AG04449 (cell line): ENCODE measurements at regions of chr6 and their contacts with region 1.

Region 1: DNA sequence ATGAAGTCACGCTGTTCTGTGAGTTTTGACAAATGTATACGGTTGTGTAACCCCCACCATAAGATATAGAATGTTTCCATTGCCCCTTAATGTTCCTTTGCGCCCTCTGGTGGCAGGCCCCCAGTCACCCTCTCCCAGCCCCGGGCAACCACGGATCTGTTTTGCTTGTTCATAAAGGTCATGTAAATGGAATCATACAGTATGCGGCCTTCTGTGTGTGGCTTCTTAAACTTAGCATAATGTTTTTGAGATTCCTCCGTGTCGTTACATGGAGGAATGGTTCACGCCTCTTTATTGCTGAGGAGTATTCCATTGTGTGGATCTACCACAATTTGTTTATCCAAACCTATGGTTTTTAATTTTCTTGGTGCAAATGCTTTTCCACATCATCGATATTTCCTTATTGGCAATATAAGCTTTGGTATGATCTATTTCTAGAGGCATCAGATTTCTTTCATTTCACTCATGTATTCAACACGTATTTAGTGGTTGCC is 28.4 kb downstream of the LYRM2 start:
- DNase-seq: no peak
- H3K4me3 ChIP-seq: no peak overlapping the region
- CTCF ChIP-seq: peak; percentile 72

Region 2: DNA sequence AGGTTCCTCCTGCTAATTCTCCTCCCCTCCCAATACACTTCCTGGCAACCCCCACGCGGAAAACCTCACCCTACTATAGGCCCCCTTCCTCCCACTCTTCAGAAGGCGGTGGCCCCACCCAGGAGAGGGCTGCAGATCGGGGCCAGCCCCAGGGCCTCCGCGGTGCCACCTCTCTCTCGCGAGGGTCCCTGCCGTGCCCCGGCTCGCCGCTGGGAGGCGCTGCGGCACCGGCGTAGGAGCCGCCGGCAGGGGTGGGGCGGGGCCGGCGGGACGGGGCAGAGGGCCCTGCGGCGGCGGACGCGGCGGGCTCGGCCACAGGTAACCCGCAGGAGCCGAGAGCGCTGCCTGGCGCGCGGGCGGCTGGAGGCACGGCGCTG is 177.3 kb before region 1 on chr6 and contains the start of gene ANKRD6:
- CTCF ChIA-PET with region 1: interaction called, 19 read pairs
- POLR2A ChIA-PET with region 1: no interaction called
- DNase-seq: no peak
- H3K4me3 ChIP-seq: peak within 1 kb of the TSS; percentile 52
- CTCF ChIP-seq: peak; percentile 83

Region 3: DNA sequence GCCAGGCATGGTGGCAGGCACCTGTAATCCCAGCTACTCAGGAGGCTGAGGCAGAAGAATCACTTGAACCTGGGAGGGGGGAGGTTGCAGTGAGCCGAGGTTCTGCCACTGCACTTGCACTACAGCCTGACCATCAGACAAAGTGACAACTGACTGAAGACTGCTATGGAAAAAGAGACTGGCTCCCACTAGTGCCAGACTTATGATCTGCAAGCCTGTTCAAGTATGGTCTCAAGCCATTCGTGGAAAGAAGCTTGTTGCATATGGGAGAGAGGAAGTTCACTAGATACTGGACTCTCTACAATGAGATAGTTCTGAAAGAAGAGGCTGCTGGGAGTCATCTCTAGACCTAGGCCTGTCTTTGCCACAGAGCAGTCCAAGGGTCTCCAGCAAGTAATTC is 182.7 kb after region 1 on chr6:
- CTCF ChIA-PET with region 1: no interaction called
- POLR2A ChIA-PET with region 1: no interaction called
- DNase-seq: no peak
- H3K4me3 ChIP-seq: no peak overlapping the region
- CTCF ChIP-seq: peak; percentile 45